Ovary (tissue), 10 donors: ENCODE measurements at regions of chr7 and their contacts with region 1.

Region 1: GRCh38 chr7:157273208-157274093 is 63.4 kb upstream of the DNAJB6 start:
- DNase-seq: peak; percentile 61 to 84 (median 68)
- H3K4me3 ChIP-seq: no peak overlapping the region
- H3K27ac ChIP-seq: peak overlapping the region; percentile 4 to 24
- H3K4me1 ChIP-seq: peaks cover 6% of the 10 kb centered on the region
- H3K27me3 ChIP-seq: no peaks in the 10 kb centered on the region
- CTCF ChIP-seq: peak; percentile 87 to 98 (median 90)
- EP300 ChIP-seq: no peak
- POLR2A ChIP-seq: no peak

Region 2: DNA sequence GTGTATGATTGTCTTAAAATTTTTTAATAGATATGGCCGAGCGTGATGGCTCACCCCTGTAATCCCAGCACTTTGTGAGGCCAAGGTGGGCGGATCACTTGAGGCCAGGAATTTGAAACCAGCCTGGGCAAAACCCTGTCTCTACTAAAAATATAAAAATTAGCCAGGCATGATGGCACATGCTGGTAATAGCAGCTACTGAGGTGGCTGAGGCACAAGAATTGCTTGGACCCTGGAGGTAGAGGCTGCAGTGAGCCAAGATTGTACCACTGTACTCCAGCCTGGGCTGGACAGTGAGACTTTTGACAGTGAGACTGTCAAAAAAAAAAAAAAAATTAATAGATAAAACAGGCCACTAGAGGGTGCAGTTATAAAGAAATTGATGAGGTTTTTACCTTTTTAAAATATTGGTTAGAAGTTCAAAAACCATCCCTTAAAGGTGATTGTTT is 303.5 kb before region 1 on chr7:
- intact Hi-C with region 1: loop called in 2 of 4 experiments (anchors 5 to 10 kb)
- DNase-seq: no peak
- H3K4me3 ChIP-seq: no peak overlapping the region
- H3K27ac ChIP-seq: no peak overlapping the region
- H3K4me1 ChIP-seq: no peaks in the 10 kb centered on the region
- H3K27me3 ChIP-seq: no peaks in the 10 kb centered on the region
- CTCF ChIP-seq: no peak
- EP300 ChIP-seq: no peak
- POLR2A ChIP-seq: no peak